Stomach (tissue), 19 donors: ENCODE measurements at regions of chr9 and their contacts with region 1.

Region 1: GRCh38 chr9:34496149-34496712 is 26.6 kb downstream of the ENHO start:
- DNase-seq: no peak
- H3K4me3 ChIP-seq: no peak overlapping the region
- H3K27ac ChIP-seq: no peak overlapping the region
- H3K4me1 ChIP-seq: peaks cover under 1 to 5% (median 3%) of the 10 kb centered on the region in 4 donors
- H3K27me3 ChIP-seq: peaks cover 0 to 18% (median 0%) of the 10 kb centered on the region in 3 donors
- CTCF ChIP-seq: no peak
- EP300 ChIP-seq: no peak
- POLR2A ChIP-seq: no peak

Region 2: DNA sequence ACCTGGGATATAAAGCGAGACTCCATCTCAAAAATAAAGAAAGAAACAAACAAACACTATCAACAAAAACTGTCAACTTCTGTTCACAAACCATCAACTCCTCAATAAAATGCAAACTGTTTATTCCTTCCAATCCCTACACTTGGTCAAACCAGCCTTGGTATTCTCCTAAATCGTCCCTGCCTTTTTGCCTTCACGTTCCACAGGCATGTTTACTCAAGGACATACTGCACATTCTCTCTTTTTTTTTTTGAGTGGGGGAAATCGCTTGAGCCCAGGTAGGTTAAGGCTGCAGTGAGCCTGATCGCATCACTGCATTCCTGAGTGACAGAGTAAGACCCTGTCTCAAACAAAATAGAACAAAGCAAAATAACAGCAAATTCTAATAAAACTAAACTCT is 460.6 kb before region 1 on chr9:
- intact Hi-C with region 1: no loop called
- DNase-seq: no peak
- H3K4me3 ChIP-seq: no peak overlapping the region
- H3K27ac ChIP-seq: no peak overlapping the region
- H3K4me1 ChIP-seq: peaks cover 0 to 19% (median 0%) of the 10 kb centered on the region in 4 donors
- H3K27me3 ChIP-seq: no peaks in the 10 kb centered on the region
- CTCF ChIP-seq: no peak
- EP300 ChIP-seq: no peak
- POLR2A ChIP-seq: no peak

Region 3: DNA sequence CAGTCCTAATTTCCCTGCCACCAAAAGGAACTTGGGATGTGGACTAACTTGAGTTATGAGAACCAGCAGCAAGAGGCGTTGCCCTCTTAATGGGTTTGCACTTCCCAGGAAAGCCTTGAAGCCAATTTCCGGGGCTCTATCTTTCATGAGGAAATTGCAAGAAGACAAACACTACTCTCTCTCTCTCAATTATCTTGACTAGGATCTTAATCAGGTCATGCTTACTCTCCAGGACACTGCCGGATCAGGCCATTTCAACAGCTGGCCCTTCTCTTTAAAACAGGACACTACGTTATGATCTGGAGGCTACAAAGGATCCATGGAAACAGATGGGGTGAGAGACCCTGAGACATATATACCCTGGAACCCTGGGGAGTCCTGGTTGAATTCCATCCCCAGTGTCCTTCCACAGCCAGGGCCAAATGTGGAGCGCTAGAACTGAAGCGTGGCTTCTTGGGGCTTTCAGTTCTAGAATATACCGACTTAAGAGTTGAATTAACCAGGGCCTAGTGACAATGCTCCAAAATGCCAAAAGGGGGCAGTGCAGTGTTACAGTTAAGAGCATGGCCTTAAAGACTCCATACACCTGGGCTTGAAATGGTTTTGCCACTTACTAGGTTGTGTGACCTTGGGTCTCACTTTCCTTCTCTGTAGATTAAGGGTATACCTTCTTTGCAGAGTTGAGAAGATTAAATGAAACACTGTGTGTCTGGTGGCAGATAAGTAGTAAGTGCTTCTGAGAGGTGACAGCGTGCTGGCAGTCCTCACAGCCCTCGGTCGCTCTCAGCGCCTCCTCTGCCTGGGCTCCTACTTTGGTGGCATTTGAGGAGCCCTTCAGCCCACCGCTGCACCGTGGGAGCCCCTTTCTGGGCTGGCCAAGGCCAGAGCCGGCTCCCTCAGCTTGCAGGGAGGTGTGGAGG is 59.0 kb before region 1 on chr9:
- intact Hi-C with region 1: loop called (anchors 5 kb)
- DNase-seq: peak; percentile 70 to 90
- H3K4me3 ChIP-seq: no peak overlapping the region
- H3K27ac ChIP-seq: no peak overlapping the region
- H3K4me1 ChIP-seq: peaks cover 0 to 13% (median 6%) of the 10 kb centered on the region in 4 donors
- H3K27me3 ChIP-seq: no peaks in the 10 kb centered on the region
- CTCF ChIP-seq: peak in 5 of 7 experiments; percentile 59 to 79 (median 71)
- EP300 ChIP-seq: no peak
- POLR2A ChIP-seq: no peak